Mammary epithelial cell (primary cell): ENCODE measurements at regions of chr6 and their contacts with region 1.

Region 1: DNA sequence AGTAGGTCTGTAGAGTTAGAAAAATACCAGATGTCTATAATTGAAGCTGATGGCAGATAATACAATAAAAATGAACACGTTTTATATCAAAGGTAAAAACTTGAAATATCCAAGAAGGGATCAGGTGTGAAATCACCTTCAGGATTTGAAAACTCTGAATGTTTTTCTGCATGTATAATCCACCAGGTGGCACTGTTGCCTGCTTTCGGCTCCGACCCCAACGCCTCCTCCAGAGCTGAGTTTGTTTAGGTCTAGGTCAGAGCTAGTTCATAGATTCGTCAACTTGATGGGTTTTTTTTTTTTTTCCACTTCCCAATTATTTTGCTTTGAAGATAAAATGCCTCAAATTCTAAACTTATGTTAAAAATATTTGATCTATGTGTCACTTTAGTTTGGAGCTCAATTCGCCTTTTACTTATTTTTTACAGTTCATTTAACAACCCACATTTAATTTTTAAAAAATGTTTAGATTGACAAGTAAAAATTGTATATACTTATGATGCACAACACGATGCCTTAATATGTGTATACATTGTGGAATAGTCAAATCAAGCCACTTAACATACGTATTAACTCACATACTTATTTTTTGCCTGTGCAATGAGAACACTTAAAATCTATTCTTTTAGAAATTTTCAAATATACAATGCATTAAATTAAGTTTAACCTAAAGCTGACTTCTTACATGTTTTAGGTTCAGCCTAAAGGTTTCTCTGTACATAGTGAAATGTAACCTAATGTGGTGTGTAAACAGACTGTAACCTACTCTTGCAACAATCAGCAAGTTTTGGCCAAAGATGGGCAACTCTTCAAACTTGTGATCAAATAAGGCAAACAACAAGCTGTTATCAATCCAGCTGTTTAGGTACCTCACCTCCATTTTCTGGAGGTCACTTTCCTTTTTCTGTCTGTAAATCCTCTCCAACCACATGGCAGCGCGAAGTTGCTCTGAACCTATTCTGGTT is 39.4 kb upstream of the ENPP4 start:
- DNase-seq: peak; percentile 41
- H3K4me3 ChIP-seq: no peak overlapping the region
- H3K27ac ChIP-seq: no peak overlapping the region
- H3K4me1 ChIP-seq: no peaks in the 10 kb centered on the region
- H3K27me3 ChIP-seq: no peaks in the 10 kb centered on the region
- CTCF ChIP-seq: peak; percentile 73 to 76

Region 2: GRCh38 chr6:46042355-46042999 is 47.9 kb before region 1 on chr6:
- CTCF ChIA-PET with region 1: no interaction called
- dilution Hi-C with region 1: no loop called
- in situ Hi-C with region 1: no loop called
- intact Hi-C with region 1: loop called (anchors 1 kb)
- DNase-seq: peak; percentile 48
- H3K4me3 ChIP-seq: no peak overlapping the region
- H3K27ac ChIP-seq: no peak overlapping the region
- H3K4me1 ChIP-seq: no peaks in the 10 kb centered on the region
- H3K27me3 ChIP-seq: peaks cover 2% of the 10 kb centered on the region
- CTCF ChIP-seq: peak; percentile 73 to 75

Region 3: GRCh38 chr6:46207174-46207573 is 116.8 kb after region 1 on chr6:
- CTCF ChIA-PET with region 1: no interaction called
- dilution Hi-C with region 1: no loop called
- in situ Hi-C with region 1: no loop called
- intact Hi-C with region 1: loop called (anchors 5 kb)
- DNase-seq: no peak
- H3K4me3 ChIP-seq: no peak overlapping the region
- H3K27ac ChIP-seq: no peak overlapping the region
- H3K4me1 ChIP-seq: no peaks in the 10 kb centered on the region
- H3K27me3 ChIP-seq: peaks cover 3% of the 10 kb centered on the region
- CTCF ChIP-seq: peak in 1 of 2 donors; percentile 19

Region 4: GRCh38 chr6:46410334-46410953 is 320.0 kb after region 1 on chr6:
- CTCF ChIA-PET with region 1: interaction called, 4 read pairs
- dilution Hi-C with region 1: no loop called
- in situ Hi-C with region 1: loop called (anchors 25 kb)
- intact Hi-C with region 1: loop called (anchors 1 kb)
- DNase-seq: peak; percentile 27
- H3K4me3 ChIP-seq: no peak overlapping the region
- H3K27ac ChIP-seq: no peak overlapping the region
- H3K4me1 ChIP-seq: no peaks in the 10 kb centered on the region
- H3K27me3 ChIP-seq: peaks cover 5% of the 10 kb centered on the region
- CTCF ChIP-seq: peak; percentile 40 to 69

Region 5: GRCh38 chr6:46491628-46492547 is 401.5 kb after region 1 on chr6:
- CTCF ChIA-PET with region 1: interaction called, 10 read pairs
- dilution Hi-C with region 1: no loop called
- in situ Hi-C with region 1: no loop called
- intact Hi-C with region 1: no loop called
- DNase-seq: peak; percentile 33
- H3K4me3 ChIP-seq: peak overlapping the region; percentile 37 to 61 (median 43)
- H3K27ac ChIP-seq: no peak overlapping the region
- H3K4me1 ChIP-seq: peaks cover 17% of the 10 kb centered on the region
- H3K27me3 ChIP-seq: peaks cover 26% of the 10 kb centered on the region
- CTCF ChIP-seq: peak; percentile 1 to 44

Region 6: GRCh38 chr6:46848684-46849360 is 758.4 kb after region 1 on chr6:
- CTCF ChIA-PET with region 1: no interaction called
- dilution Hi-C with region 1: no loop called
- in situ Hi-C with region 1: no loop called
- intact Hi-C with region 1: loop called (anchors 10 kb)
- DNase-seq: peak; percentile 73
- H3K4me3 ChIP-seq: no peak overlapping the region
- H3K27ac ChIP-seq: no peak overlapping the region
- H3K4me1 ChIP-seq: peaks cover 15% of the 10 kb centered on the region
- H3K27me3 ChIP-seq: no peaks in the 10 kb centered on the region
- CTCF ChIP-seq: peak; percentile 69 to 96